ENCODE measurements at regions of chr15 and their contacts with region 1.

Region 1: DNA sequence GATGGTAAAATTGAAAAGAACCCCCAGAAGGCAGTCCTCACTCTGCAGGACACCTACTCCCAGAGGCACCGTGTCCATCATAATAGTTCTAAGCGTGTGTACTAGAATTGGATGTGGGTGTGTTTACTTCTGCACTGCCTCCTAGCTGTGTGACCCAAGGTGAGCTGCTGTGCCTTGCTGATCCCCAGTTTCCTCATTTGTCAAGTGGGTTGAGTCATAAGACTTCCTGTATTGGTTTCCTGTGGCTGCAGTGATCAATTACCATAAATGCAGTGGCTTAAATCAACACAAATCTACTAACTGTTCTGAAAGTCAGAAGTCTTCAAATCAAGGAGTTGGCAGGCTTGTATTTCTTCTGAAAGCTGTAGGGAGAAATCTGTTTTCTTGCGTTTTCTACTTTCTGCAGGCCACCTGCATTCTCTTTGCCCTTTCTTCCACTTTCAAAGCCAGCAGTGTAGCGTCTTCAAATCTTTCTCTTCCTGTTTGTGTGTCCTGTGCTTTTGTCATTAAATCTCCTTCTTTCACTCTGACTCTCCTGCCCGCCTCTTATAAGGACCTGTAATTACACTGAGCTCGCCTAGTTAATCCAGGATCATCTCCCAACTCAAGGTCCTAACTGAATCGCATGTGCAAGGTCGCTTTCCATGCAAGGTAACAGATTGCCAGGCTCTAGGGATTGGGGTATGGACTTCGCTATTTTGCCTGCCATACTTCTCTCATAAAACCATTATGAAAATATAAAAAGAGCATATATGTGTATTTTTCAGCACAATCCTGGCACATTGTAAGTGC is 59.0 kb downstream of the RORA start:
- DNase-seq: no peak
- H3K4me3 ChIP-seq: no peak overlapping the region
- H3K27ac ChIP-seq: peak overlapping the region in 3 of 4 donors; percentile 39 to 79 (median 73)
- H3K4me1 ChIP-seq: peaks cover 2 to 23% (median 5%) of the 10 kb centered on the region in 3 donors
- H3K27me3 ChIP-seq: no peaks in the 10 kb centered on the region
- CTCF ChIP-seq: peak in 1 of 6 experiments; percentile 22
- POLR2A ChIP-seq: no peak

Region 2: GRCh38 chr15:60798821-60799220 is 371.3 kb before region 1 on chr15:
- intact Hi-C with region 1: no loop called
- DNase-seq: no peak
- H3K4me3 ChIP-seq: no peak overlapping the region
- H3K27ac ChIP-seq: peak overlapping the region in 3 of 4 donors; percentile 37 to 62 (median 49)
- H3K4me1 ChIP-seq: peaks cover 0 to 54% (median 8%) of the 10 kb centered on the region in 3 donors
- H3K27me3 ChIP-seq: no peaks in the 10 kb centered on the region
- CTCF ChIP-seq: no peak
- POLR2A ChIP-seq: no peak

Region 3: GRCh38 chr15:61834076-61834697 is 664.1 kb after region 1 on chr15:
- intact Hi-C with region 1: loop called (anchors 10 kb)
- DNase-seq: no peak
- H3K4me3 ChIP-seq: no peak overlapping the region
- H3K27ac ChIP-seq: no peak overlapping the region
- H3K4me1 ChIP-seq: peaks cover 0 to 5% (median 4%) of the 10 kb centered on the region in 3 donors
- H3K27me3 ChIP-seq: peaks cover 0 to 10% (median 0%) of the 10 kb centered on the region in 4 donors
- CTCF ChIP-seq: peak; percentile 92 to 98 (median 94)
- POLR2A ChIP-seq: no peak

Measured in esophagus squamous epithelium (tissue), 5 donors.